HEK293T (cell line): ENCODE measurements at regions of chr19 and their contacts with region 1.

Region 1: GRCh38 chr19:42529248-42529764 is 1.0 kb upstream of the CEACAM1 start:
- DNase-seq: peak; percentile 75

Region 2: GRCh38 chr19:42450314-42450934 is 78.9 kb before region 1 on chr19:
- CTCF ChIA-PET with region 1: interaction called, 25 read pairs
- POLR2A ChIA-PET with region 1: no interaction called
- DNase-seq: peak; percentile 79